WTC11 (cell line): ENCODE measurements at regions of chr5 and their contacts with region 1.

Region 1: GRCh38 chr5:132777209-132778069 is at the start of gene SEPTIN8:
- DNase-seq: peak; percentile 54
- ATAC-seq: peak; percentile 57
- H3K4me3 Mint-ChIP-seq: peak within 1 kb of the TSS; percentile 67
- H3K27ac Mint-ChIP-seq: no peak within 1 kb of the TSS
- H3K4me1 Mint-ChIP-seq: peaks cover 23% of the 10 kb centered on the region
- H3K27me3 Mint-ChIP-seq: peaks cover 50% of the 10 kb centered on the region
- CTCF ChIP-seq: no peak
- total RNA-seq, gene SEPTIN8: 35.8 to 43.3 TPM (median 38.1 TPM) in 3 replicates

Region 2: DNA sequence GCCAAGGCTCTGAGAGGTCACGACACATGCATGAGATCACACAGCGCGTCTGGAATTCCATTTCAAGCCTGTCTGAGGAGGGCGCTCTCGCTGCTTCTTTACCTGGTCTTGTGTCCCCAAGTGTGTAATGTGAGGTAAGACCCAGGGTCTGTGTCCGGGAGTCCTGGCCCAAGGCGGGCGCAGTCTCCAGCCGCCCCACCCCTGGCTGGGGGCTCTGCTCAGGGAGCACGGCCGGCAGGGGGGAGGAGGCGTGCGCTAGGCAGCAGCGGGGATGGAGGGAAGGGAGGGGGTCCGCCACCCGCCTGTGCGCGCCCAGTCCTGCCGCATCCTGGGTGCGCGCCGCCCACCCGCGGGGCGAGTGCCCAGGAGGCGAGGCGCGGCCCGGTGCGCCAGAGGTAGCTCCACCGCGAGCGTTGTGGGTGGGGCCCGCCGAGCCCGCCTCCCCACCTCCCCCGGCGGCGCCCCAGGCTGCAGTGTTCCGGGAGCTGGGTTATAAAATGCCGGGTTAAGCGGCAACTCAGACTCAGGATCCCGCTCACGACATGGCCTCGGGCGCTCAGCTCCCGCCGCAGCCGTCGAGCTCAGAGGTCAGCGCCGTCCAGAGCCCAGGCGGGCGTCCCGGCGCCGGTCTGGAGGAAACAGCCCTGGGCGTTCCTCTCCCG is 30.4 kb before region 1 on chr5 and contains the start of gene CCNI2:
- CTCF ChIA-PET with region 1: interaction called, 11 read pairs
- POLR2A ChIA-PET with region 1: no interaction called
- DNase-seq: peak; percentile 73
- ATAC-seq: peak; percentile 81
- H3K4me3 Mint-ChIP-seq: peak within 1 kb of the TSS; percentile 59
- H3K27ac Mint-ChIP-seq: no peak within 1 kb of the TSS
- H3K4me1 Mint-ChIP-seq: peaks cover 4% of the 10 kb centered on the region; the same call in 1 of the 2 replicates
- H3K27me3 Mint-ChIP-seq: peaks cover 66% of the 10 kb centered on the region
- CTCF ChIP-seq: no peak
- total RNA-seq, gene CCNI2: 1.1 to 1.7 TPM (median 1.6 TPM) in 3 replicates

Region 3: GRCh38 chr5:132753135-132753987 is 24.1 kb before region 1 on chr5:
- CTCF ChIA-PET with region 1: interaction called, 26 read pairs
- POLR2A ChIA-PET with region 1: no interaction called
- DNase-seq: peak; percentile 40
- ATAC-seq: peak; percentile 91
- H3K4me3 Mint-ChIP-seq: no peak overlapping the region
- H3K27ac Mint-ChIP-seq: peak overlapping the region; percentile 28; the same call in 1 of the 2 replicates
- H3K4me1 Mint-ChIP-seq: peaks cover 17% of the 10 kb centered on the region
- H3K27me3 Mint-ChIP-seq: peaks cover 25% of the 10 kb centered on the region
- CTCF ChIP-seq: no peak